Activated CD4-positive, alpha-beta T cell treated with anti-CD3 and anti-CD28 coated beads for 36 hours (primary cell): ENCODE measurements at regions of chr2 and their contacts with region 1.

Region 1: DNA sequence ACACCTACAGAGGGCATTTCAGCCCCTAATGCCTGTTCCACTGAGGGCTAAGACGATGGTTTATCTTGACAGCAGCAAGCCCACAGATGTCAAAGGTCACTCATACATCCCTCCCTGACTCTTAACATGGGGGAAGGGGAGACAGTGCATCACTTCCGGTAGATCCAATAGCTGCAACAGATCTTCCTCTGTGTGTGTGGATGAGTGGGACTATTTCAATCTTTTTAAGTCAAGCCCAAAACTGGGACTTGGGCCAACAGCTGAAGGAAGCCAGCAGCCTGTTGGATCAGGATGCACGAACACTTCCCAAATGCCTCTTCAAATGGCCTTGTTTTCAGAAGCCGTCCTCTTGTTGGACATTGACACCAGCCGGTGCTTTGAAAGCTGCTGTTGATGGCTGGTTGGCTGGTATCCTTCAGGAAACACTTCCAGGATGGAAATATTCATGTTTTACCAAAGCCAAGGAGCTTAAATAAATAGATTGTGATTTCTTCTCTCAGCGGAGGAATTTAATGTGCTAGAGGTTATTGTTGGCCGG is 59.2 kb downstream of the IL1R2 start:
- DNase-seq: no peak
- ATAC-seq: no peak
- H3K4me3 Mint-ChIP-seq: no peak overlapping the region
- H3K27ac Mint-ChIP-seq: no peak overlapping the region
- H3K4me1 Mint-ChIP-seq: peaks cover 12% of the 10 kb centered on the region
- H3K27me3 Mint-ChIP-seq: peaks cover 11% of the 10 kb centered on the region

Region 2: GRCh38 chr2:101751875-101752619 is 298.9 kb before region 1 on chr2:
- CTCF ChIA-PET with region 1: no interaction called
- POLR2A ChIA-PET with region 1: no interaction called
- intact Hi-C with region 1: no loop called
- DNase-seq: no peak
- ATAC-seq: no peak
- H3K4me3 Mint-ChIP-seq: no peak overlapping the region
- H3K27ac Mint-ChIP-seq: no peak overlapping the region
- H3K4me1 Mint-ChIP-seq: peaks cover 76% of the 10 kb centered on the region
- H3K27me3 Mint-ChIP-seq: no peaks in the 10 kb centered on the region

Region 3: GRCh38 chr2:102033031-102033749 is 17.7 kb before region 1 on chr2:
- CTCF ChIA-PET with region 1: no interaction called
- POLR2A ChIA-PET with region 1: no interaction called
- intact Hi-C with region 1: loop called in 1 of 2 experiments (anchors 1 kb)
- DNase-seq: peak; percentile 41
- ATAC-seq: peak; percentile 66
- H3K4me3 Mint-ChIP-seq: no peak overlapping the region
- H3K27ac Mint-ChIP-seq: peak overlapping the region; percentile 62
- H3K4me1 Mint-ChIP-seq: peaks cover 40% of the 10 kb centered on the region
- H3K27me3 Mint-ChIP-seq: no peaks in the 10 kb centered on the region